ENCODE measurements at regions of chr2 and their contacts with region 1.

Region 1: DNA sequence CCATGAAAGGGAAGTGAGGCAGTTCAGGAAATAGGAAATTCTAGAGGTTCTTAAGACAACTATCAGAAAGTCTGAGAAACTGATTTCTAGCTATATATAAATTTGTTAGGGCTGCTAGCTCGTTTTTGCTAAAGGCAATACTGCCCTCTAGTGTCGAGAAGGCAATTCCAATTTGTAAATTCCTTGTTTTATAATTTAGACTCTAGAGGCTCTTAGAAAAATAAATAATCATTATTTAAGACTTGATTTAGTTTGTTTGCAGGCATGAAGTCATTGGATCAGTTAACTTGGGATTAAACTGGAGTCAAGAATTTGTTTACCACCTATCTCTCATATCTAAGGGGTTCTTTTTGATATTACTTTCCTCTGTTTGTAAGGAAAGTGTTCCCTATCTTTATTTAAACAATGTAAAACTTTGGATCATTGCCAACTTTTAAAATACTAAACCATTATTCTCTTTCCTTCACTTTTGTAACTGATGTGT is 66.2 kb downstream of the ACVR2A start:
- DNase-seq: no peak
- ATAC-seq: no peak

Region 2: DNA sequence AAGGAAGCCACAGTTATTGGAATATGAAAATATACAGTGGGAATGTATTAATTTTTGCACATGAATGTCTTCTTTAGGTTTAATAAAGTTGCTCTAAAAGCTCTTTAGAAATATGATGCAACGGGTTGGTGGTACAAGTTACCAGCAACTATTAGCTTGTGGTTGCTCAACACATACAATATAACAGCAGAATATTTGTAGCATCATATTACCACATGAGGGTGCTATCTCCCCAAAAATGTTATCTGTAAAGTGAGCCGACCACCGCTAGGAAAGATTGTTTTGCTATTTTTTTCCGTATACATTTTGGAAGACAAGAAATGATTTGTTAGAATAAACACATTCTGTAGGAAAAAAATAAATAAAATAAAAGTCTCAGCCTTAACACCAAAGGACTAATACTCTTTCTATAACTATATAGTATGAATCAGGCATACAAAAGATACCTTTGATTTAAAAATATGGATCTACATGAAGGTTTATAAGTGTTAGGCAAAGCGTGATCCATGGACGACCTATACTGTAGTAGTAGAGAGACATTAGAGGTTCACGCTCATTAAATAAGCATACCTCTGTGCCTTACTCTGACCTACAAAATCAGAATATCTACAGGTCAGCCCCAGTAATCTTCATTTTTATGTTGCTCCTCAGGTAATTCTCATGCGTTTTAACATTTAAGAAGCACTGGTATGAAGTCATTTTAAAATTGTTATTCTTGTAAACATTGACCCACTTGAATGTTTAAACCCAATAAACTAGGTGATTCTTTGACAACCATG is 1176.8 kb before region 1 on chr2:
- intact Hi-C with region 1: loop called (anchors 10 kb)
- DNase-seq: no peak
- ATAC-seq: no peak

Region 3: GRCh38 chr2:147045113-147045512 is 865.9 kb before region 1 on chr2:
- intact Hi-C with region 1: loop called (anchors 10 kb)
- DNase-seq: no peak
- ATAC-seq: no peak

Region 4: DNA sequence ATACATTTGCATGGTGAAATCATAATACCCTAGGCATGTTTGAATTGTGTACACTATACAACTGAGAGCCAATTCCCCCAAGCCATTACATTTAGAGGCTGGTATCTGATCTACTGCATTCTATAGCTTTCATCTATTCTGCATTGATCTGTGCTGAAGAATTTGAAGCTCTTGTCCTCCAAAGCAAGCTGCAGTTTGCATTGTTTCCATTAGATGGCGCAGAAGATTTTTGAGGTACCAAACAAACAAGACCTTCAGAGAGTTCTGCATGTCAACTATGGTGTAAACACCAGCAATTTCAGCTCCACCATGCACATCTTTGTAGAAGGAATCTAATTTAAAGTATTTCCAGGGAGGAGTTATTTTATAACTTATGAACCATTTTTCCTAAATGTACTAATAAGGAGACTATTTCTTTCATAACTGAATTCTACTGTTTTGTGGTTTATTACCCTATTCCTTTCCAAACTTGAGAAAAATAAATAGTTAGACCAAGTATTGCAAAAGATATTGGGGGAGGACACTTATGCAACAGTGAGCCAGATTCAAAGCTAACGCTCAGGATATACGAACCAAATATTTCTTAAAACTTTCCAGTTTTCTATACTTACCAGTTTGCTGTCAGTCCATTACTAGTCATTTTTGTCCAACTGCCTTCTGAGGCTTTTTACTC is 828.0 kb before region 1 on chr2:
- intact Hi-C with region 1: loop called (anchors 2 kb)
- DNase-seq: no peak
- ATAC-seq: peak; percentile 34

Region 5: DNA sequence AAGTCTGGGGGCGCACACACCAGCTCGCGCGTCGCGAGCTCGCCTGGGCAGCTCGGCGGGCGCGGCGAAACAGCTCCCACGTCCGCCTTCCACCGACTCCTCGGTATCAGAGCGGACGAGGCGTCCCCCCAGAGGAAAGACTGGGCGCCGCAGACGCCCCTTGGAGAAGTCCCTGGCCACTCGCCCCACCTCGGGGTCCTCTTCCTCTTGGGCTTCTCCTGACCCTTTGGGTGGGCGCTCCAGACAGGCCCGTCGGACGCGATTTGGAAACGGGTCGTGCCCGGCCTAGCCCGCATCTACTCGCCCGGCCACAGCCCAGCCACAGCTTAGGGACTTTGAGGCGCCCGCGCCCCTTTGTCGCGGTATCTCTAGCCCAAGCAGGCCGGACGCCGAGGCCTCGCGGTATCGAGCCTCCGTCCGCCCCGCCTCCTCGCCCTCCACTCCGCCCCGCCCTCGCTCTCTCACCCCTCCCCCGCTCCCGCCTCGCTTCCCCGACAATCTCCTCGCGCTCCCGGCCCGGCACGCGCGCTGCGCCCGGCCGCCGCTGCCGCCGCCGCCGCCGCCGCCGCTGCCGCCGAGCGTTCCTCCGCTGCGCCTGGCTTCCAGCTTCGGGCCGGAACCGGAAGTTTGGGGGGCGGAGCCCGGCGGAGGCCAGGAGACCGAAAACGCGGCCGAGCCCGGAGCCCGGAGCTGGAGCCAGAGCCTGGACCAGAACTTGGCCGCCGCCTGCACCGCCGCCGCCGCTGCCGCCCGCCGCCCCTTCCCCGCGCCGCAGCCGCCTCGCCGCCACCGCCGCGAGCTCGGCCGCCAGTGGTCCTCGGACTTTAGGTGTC is 67.0 kb before region 1 on chr2:
- intact Hi-C with region 1: loop called (anchors 10 kb)
- DNase-seq: peak; percentile 95
- ATAC-seq: peak; percentile 96